ENCODE measurements at regions of chr13 and their contacts with region 1.

Region 1: GRCh38 chr13:104635879-104636278 is 1569.7 kb upstream of the SLC10A2 start:
- DNase-seq: no peak
- H3K4me3 ChIP-seq: no peak overlapping the region
- H3K27ac ChIP-seq: no peak overlapping the region
- H3K4me1 ChIP-seq: no peaks in the 10 kb centered on the region
- H3K27me3 ChIP-seq: no peaks in the 10 kb centered on the region
- CTCF ChIP-seq: no peak
- POLR2A ChIP-seq: no peak

Region 2: DNA sequence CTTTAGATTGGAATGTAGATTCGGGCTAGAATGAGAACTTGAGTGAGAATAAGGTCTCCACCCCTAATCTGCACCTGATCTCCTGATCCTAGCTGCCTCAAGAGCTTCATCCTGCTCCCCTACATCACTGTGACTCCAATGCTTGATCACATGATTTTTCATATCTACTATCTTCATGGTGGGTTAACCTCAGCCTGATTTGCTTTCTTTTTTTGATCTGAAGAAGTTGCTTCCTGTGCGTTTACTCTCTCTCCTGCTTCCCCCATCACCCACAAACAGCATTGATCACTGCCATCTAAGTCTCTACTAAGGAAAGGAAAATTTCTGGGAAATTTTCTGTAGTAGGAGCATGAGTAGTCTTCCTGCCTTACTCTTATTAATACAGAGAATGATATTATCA is 27.5 kb before region 1 on chr13:
- intact Hi-C with region 1: loop called (anchors 2 kb)
- DNase-seq: no peak
- H3K4me3 ChIP-seq: no peak overlapping the region
- H3K27ac ChIP-seq: no peak overlapping the region
- H3K4me1 ChIP-seq: no peaks in the 10 kb centered on the region
- H3K27me3 ChIP-seq: no peaks in the 10 kb centered on the region
- CTCF ChIP-seq: no peak
- POLR2A ChIP-seq: no peak

Region 3: GRCh38 chr13:104796581-104796980 is 160.7 kb after region 1 on chr13:
- intact Hi-C with region 1: no loop called
- DNase-seq: no peak
- H3K4me3 ChIP-seq: no peak overlapping the region
- H3K27ac ChIP-seq: no peak overlapping the region
- H3K4me1 ChIP-seq: no peaks in the 10 kb centered on the region
- H3K27me3 ChIP-seq: no peaks in the 10 kb centered on the region
- CTCF ChIP-seq: no peak
- POLR2A ChIP-seq: no peak

Measured in breast epithelium (tissue), 4 donors.